WTC11 (cell line): ENCODE measurements at regions of chr4 and their contacts with region 1.

Region 1: DNA sequence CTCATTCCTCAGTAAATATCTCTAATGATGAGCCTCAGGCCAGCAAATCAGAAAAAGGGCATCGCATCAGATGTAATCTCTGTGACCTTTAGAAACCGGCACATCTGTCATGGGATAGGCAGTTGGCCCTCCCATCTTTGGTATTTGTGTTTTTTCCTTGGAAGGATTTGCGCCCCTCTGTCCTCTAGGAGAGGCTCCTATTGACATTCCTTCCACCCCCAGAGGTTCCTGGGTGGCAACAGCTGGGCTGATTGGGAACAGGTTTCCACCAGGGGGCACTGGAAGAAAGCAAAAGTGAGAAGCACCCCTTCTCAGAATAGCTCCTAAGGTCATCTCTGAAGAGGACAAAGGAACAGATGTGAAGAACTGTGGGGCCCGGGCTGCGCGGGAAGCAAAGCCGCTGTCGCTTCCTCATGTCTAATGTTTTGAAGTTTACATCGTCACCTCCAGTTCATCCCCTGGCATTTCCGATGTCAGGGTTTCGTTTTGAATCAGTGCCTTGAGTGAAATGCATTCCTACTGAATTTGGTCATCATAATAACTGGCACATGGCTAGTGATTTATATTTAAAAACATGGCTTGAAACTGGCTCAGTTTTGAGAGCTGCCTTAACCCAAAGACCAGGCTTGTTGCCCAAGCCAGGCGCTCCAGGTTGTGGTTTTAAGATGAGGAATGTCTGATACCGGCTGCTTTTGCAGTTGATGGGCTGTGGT is 6.2 kb downstream of the TXK start:
- DNase-seq: peak; percentile 87
- ATAC-seq: peak; percentile 88
- H3K4me3 Mint-ChIP-seq: peak overlapping the region; percentile 45
- H3K27ac Mint-ChIP-seq: peak overlapping the region; percentile 97
- H3K4me1 Mint-ChIP-seq: peaks cover 57% of the 10 kb centered on the region
- H3K27me3 Mint-ChIP-seq: peaks cover 3% of the 10 kb centered on the region; the same call in 1 of the 2 replicates
- CTCF ChIP-seq: peak; percentile 59

Region 2: GRCh38 chr4:48141048-48141447 is 13.2 kb after region 1 on chr4:
- CTCF ChIA-PET with region 1: interaction called, 16 read pairs
- POLR2A ChIA-PET with region 1: no interaction called
- DNase-seq: no peak
- ATAC-seq: peak; percentile 47
- H3K4me3 Mint-ChIP-seq: no peak overlapping the region
- H3K27ac Mint-ChIP-seq: no peak overlapping the region
- H3K4me1 Mint-ChIP-seq: no peaks in the 10 kb centered on the region
- H3K27me3 Mint-ChIP-seq: no peaks in the 10 kb centered on the region
- CTCF ChIP-seq: peak; percentile 58

Region 3: DNA sequence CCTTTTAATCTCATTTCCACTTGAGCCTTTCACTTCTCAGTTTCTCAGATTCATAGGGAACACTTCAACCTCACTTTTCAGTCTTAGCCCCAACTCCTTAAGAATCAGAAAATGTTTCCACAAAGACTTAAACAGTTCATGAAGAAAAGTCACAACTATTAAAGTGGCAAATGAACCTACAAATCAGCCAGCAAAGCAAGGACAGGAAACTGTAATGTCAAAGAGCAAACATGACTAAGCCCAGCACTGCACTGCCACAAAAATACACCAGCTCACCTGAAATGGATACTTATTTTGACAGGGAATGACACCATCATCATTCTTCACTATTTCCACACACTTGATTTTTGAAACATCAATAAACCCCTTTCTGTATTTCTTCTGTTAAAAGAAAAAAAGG is 48.0 kb after region 1 on chr4:
- CTCF ChIA-PET with region 1: interaction called, 10 read pairs
- POLR2A ChIA-PET with region 1: no interaction called
- DNase-seq: no peak
- ATAC-seq: no peak
- H3K4me3 Mint-ChIP-seq: no peak overlapping the region
- H3K27ac Mint-ChIP-seq: peak overlapping the region; percentile 99
- H3K4me1 Mint-ChIP-seq: peaks cover 83% of the 10 kb centered on the region
- H3K27me3 Mint-ChIP-seq: no peaks in the 10 kb centered on the region
- CTCF ChIP-seq: no peak

Region 4: DNA sequence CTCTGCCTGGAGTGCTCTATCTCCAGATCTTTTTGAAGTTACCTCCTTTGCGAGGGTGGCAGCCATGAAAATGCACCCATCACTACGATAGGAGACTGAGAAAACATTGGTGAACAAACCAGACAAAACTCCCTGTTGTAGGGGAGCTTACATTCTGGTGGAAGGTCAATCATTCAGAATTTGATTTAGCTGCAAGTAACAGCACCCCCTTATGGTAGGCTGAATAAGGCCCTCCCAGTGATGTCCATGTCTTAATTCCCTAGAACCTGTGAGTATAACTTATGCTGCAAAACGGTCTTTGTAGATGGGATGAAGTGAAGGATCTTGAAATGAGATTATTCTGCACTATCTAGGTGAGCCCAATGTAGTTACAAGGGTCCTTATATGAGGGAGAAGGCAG is 147.4 kb after region 1 on chr4:
- CTCF ChIA-PET with region 1: interaction called, 37 read pairs
- POLR2A ChIA-PET with region 1: no interaction called
- DNase-seq: no peak
- ATAC-seq: peak; percentile 84
- H3K4me3 Mint-ChIP-seq: no peak overlapping the region
- H3K27ac Mint-ChIP-seq: no peak overlapping the region
- H3K4me1 Mint-ChIP-seq: peaks cover 9% of the 10 kb centered on the region
- H3K27me3 Mint-ChIP-seq: peaks cover 4% of the 10 kb centered on the region; the same call in 1 of the 2 replicates
- CTCF ChIP-seq: peak; percentile 28; the same call in 1 of the 2 replicates

Region 5: DNA sequence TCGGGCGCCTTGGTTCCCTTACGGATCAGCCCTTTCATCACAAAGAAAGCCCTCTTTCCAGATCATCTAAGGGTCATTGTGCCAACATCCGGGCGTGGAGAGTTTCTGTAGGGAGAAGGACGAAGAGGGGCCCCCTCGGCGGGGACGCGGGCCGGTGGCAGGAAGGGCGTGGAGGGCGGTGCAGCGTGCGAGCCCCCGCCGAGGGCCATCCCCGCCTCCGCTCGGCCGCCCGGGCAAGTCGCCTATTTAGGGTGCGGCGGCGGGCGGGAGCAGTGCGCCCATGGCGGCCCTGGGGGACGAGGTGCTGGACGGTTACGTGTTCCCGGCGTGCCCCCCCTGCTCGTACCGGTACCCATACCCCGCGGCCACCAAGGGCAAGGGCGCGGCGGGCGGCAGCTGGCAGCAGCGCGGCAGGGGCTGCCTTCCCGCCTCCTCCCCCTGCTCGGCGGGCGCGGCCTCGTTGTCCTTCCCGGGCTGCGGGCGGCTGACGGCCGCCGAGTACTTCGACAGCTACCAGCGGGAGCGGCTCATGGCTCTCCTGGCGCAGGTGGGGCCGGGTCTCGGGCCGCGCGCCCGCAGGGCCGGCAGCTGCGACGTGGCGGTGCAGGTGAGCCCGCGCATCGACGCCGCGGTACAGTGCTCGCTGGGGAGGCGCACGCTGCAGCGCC is 362.3 kb after region 1 on chr4 and contains the start of gene ZAR1:
- CTCF ChIA-PET with region 1: interaction called, 10 read pairs
- POLR2A ChIA-PET with region 1: no interaction called
- DNase-seq: peak; percentile 46
- ATAC-seq: peak; percentile 43
- H3K4me3 Mint-ChIP-seq: peak within 1 kb of the TSS; percentile 72
- H3K27ac Mint-ChIP-seq: no peak within 1 kb of the TSS
- H3K4me1 Mint-ChIP-seq: peaks cover 13% of the 10 kb centered on the region
- H3K27me3 Mint-ChIP-seq: peaks cover 48% of the 10 kb centered on the region
- CTCF ChIP-seq: no peak
- total RNA-seq, gene ZAR1: 0.87 to 1.4 TPM (median 0.89 TPM) in 3 replicates

Region 6: GRCh38 chr4:48546336-48546735 is 418.5 kb after region 1 on chr4:
- CTCF ChIA-PET with region 1: interaction called, 22 read pairs
- POLR2A ChIA-PET with region 1: no interaction called
- DNase-seq: peak; percentile 34
- ATAC-seq: 0 out of 2 replicates have a peak, but pooled peaks have one; percentile 22
- H3K4me3 Mint-ChIP-seq: no peak overlapping the region
- H3K27ac Mint-ChIP-seq: no peak overlapping the region
- H3K4me1 Mint-ChIP-seq: peaks cover 17% of the 10 kb centered on the region
- H3K27me3 Mint-ChIP-seq: no peaks in the 10 kb centered on the region
- CTCF ChIP-seq: peak; percentile 57; the same call in 1 of the 2 replicates